ENCODE measurements at regions of chr17 and their contacts with region 1.

Region 1: DNA sequence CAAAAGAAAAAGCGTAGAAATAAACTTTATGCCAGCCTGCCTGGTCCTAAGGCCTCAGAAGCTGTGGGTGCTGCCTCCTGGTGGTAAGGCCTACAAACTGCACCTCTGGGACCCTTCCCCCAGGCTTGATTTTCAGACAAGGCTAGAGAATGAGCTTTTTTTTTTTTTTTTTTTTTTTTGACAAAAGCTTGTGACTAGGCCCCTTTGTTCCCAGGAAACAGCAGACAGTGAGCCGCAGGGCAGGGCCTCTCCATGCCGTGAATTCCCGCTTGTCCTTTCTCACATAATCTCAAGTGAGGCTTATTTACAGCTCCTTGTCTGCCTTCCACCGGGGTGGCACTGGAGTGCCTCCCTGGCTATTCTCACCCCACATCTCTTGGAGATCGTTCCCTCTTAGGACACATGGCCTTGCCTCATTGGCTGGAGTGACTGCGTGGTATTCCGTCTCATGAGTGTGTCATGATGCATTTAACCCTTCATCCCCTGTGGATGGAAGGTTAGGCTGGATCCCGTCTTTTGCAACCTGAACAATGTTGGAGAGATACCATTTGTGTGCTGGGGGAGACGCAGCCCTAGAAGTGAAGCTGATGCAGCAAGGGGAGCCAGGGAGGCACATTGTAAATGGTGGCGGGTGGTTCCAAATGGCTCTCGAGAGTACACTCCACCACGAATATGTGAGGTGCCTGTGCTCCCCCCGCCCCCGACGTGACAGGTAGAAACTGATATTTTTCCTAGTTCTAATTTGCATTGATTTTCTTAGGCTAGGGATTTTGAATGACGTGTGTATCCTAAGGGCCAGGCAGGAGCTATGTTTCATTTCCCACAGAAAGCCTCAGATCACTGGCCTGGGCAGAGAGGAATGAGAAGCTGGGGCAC is 49.6 kb downstream of the USP22 start:
- DNase-seq: peak; percentile 49 to 82
- ATAC-seq: peak; percentile 73 to 97 (median 86)
- H3K4me3 ChIP-seq: no peak overlapping the region
- H3K4me3 Mint-ChIP-seq: no peak overlapping the region
- H3K27ac ChIP-seq: no peak overlapping the region
- H3K27ac Mint-ChIP-seq: no peak overlapping the region
- H3K4me1 ChIP-seq: no peaks in the 10 kb centered on the region
- H3K4me1 Mint-ChIP-seq: no peaks in the 10 kb centered on the region
- H3K27me3 ChIP-seq: no peaks in the 10 kb centered on the region
- H3K27me3 Mint-ChIP-seq: no peaks in the 10 kb centered on the region
- CTCF ChIP-seq: peak; percentile 86

Region 2: GRCh38 chr17:20226814-20227482 is 766.3 kb before region 1 on chr17:
- intact Hi-C with region 1: loop called (anchors 5 kb)
- DNase-seq: peak; percentile 63 to 88
- ATAC-seq: peak; percentile 87 to 99 (median 96)
- H3K4me3 ChIP-seq: no peak overlapping the region
- H3K4me3 Mint-ChIP-seq: no peak overlapping the region
- H3K27ac ChIP-seq: no peak overlapping the region
- H3K27ac Mint-ChIP-seq: no peak overlapping the region
- H3K4me1 ChIP-seq: no peaks in the 10 kb centered on the region
- H3K4me1 Mint-ChIP-seq: peaks cover 4% of the 10 kb centered on the region in 2 donors
- H3K27me3 ChIP-seq: no peaks in the 10 kb centered on the region
- H3K27me3 Mint-ChIP-seq: no peaks in the 10 kb centered on the region
- CTCF ChIP-seq: peak; percentile 88

Region 3: DNA sequence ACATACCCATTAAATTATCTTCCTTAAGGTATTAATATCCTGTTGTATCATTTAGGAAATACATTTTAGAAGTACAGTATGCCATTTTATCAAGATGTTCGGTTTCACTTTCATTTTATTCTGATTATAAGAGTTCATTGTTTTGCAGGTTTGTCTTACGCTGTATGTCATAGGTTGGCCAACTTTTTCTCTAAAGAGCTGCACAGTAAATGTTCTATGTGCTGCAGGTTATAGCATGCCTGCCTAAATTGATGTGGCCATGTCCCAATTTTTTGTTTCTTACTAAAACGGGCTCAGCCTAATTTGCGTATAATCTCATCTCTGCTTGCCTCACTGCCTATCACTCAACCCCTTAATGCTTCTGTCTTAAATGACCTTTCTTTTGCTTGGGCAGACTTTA is 76.8 kb before region 1 on chr17:
- intact Hi-C with region 1: no loop called
- DNase-seq: no peak
- ATAC-seq: no peak
- H3K4me3 ChIP-seq: no peak overlapping the region
- H3K4me3 Mint-ChIP-seq: no peak overlapping the region
- H3K27ac ChIP-seq: no peak overlapping the region
- H3K27ac Mint-ChIP-seq: no peak overlapping the region
- H3K4me1 ChIP-seq: no peaks in the 10 kb centered on the region
- H3K4me1 Mint-ChIP-seq: peaks cover 8 to 9% of the 10 kb centered on the region in 2 donors
- H3K27me3 ChIP-seq: no peaks in the 10 kb centered on the region
- H3K27me3 Mint-ChIP-seq: peaks cover 15 to 22% of the 10 kb centered on the region in 2 donors
- CTCF ChIP-seq: no peak

Region 4: GRCh38 chr17:21330436-21331160 is 337.4 kb after region 1 on chr17:
- intact Hi-C with region 1: no loop called
- DNase-seq: no peak
- ATAC-seq: peak in 1 of 3 donors; percentile 27
- H3K4me3 ChIP-seq: no peak overlapping the region
- H3K4me3 Mint-ChIP-seq: no peak overlapping the region
- H3K27ac ChIP-seq: no peak overlapping the region
- H3K27ac Mint-ChIP-seq: no peak overlapping the region
- H3K4me1 ChIP-seq: peaks cover 3% of the 10 kb centered on the region
- H3K4me1 Mint-ChIP-seq: no peaks in the 10 kb centered on the region
- H3K27me3 ChIP-seq: no peaks in the 10 kb centered on the region
- H3K27me3 Mint-ChIP-seq: peaks cover 3% of the 10 kb centered on the region in 2 donors
- CTCF ChIP-seq: no peak

Measured in natural killer cell (primary cell).